ENCODE measurements at regions of chr19 and their contacts with region 1.

Region 1: DNA sequence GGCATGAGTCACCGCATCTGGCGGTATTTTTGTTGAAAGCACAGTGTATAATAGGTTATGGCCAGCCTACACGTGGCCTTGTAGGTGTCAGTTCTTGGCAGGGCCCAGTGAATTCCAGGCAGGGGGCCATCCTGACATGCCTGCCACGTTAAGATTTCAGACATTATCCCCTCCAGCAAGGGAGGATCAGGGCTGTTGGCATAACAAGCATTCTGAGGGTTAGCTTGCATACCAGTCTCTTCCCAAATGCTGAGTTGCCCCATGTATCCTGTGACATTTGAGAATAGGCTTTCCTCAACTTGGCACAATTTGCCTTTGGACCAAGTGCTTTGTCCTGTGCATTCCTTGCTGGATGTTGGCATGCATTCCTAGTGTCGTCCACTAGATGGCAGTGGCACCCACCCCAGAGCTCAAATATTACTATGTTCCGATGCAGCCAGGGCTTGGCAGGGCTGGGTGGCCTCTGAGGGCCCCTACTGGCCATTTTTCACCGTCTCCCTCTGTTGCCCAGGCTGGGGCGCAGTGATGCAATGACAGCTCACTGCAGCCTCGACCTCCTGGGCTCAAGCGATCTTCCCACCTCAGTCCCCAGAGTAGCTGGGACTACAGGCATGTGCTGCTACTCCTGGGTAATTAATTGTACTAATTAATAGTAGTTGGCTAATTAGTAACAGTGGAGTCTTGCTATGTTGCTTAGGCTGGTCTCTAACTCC is 31.2 kb downstream of the NLRP12 start:
- DNase-seq: peak; percentile 82
- ATAC-seq: peak; percentile 100
- H3K4me3 ChIP-seq: no peak overlapping the region
- H3K27ac ChIP-seq: no peak overlapping the region
- H3K4me1 ChIP-seq: no peaks in the 10 kb centered on the region
- H3K27me3 ChIP-seq: no peaks in the 10 kb centered on the region
- CTCF ChIP-seq: peak; percentile 99
- POLR2A ChIP-seq: no peak
- RAD21 ChIP-seq: peak; percentile 90

Region 2: DNA sequence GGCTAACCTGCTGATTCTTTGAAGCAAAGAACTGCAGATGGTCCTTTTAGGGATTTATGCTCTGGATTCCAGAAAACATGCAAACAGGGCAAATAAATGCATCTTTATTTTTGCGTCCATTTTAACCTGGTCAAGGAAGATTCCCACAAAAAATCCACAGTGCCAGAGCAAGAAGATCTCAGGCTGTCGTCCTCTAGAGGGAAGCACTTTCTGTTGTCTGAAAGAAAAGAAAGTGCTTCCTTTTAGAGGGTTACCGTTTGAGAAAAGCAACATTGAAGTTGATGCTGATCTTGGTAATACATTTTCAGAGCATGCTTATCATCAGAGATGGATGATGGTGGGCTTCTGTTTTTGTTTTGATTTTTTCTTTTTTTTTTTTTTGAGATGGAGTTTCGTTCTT is 85.6 kb before region 1 on chr19:
- CTCF ChIA-PET with region 1: no interaction called
- POLR2A ChIA-PET with region 1: no interaction called
- RAD21 ChIA-PET with region 1: no interaction called
- intact Hi-C with region 1: no loop called
- DNase-seq: no peak
- ATAC-seq: no peak
- H3K4me3 ChIP-seq: no peak overlapping the region
- H3K27ac ChIP-seq: no peak overlapping the region
- H3K4me1 ChIP-seq: no peaks in the 10 kb centered on the region
- H3K27me3 ChIP-seq: no peaks in the 10 kb centered on the region
- CTCF ChIP-seq: no peak
- POLR2A ChIP-seq: no peak
- RAD21 ChIP-seq: no peak

Region 3: DNA sequence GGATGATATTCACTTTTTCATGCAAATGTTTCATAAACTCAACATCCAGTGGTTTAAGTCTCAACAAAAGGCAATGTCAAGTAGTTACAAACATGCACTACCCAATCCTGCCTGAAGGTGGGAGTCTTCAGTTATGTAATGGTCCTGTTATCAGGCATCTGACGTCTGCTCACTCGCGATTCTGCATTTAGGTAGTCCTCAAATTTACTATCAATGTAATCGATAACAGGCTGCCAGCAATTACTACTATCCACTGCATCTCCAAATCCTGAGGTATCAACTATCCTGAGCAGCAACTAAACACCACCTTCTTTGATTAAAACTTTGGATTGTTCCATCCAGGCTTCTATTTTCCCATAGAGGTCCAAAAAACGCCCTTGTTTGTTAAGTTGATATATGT is 19.9 kb before region 1 on chr19:
- CTCF ChIA-PET with region 1: interaction called, 9 read pairs
- POLR2A ChIA-PET with region 1: no interaction called
- RAD21 ChIA-PET with region 1: interaction called in 1 of 2 experiments, 3 read pairs
- intact Hi-C with region 1: loop called (anchors 1 kb)
- DNase-seq: peak; percentile 61
- ATAC-seq: peak; percentile 78
- H3K4me3 ChIP-seq: no peak overlapping the region
- H3K27ac ChIP-seq: no peak overlapping the region
- H3K4me1 ChIP-seq: no peaks in the 10 kb centered on the region
- H3K27me3 ChIP-seq: no peaks in the 10 kb centered on the region
- CTCF ChIP-seq: peak; percentile 51 to 68 (median 65); a peak in 5 of 6 replicates
- POLR2A ChIP-seq: no peak
- RAD21 ChIP-seq: peak; percentile 67

Region 4: DNA sequence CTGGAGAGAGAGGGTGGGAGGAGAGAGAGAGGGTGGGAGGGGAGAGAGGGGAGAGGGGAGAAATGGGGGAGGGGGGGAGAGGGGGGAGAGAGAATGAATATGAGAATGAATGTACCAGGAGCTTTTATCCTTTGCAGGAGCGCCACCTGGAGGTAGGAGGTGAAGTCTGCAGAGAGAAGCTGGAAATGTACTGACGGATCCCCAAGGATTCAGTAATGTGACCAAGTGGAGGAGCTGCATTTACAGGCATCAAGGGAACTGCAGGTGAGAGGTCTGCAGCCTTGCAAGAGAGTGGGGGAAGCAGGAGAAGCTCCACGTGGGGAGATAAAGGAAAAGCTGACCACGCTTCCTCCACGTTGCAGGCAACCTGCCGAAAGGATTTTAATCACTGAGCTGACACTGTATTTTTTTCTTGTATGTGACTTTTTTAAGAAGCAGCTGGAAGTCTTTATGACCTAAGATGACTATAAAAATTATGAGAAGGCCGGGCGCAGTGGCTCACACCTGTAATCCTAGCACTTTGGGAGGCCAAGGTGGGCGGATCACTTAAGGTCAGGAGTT is 237.1 kb after region 1 on chr19:
- CTCF ChIA-PET with region 1: interaction called, 31 read pairs
- POLR2A ChIA-PET with region 1: no interaction called
- RAD21 ChIA-PET with region 1: interaction called in 1 of 2 experiments, 4 read pairs
- intact Hi-C with region 1: no loop called
- DNase-seq: peak; percentile 69
- ATAC-seq: peak; percentile 88
- H3K4me3 ChIP-seq: no peak overlapping the region
- H3K27ac ChIP-seq: no peak overlapping the region
- H3K4me1 ChIP-seq: peaks cover 0 to 3% of the 10 kb centered on the region in 2 experiments; a peak in 1 of 4 replicates
- H3K27me3 ChIP-seq: no peaks in the 10 kb centered on the region
- CTCF ChIP-seq: peak; percentile 66 to 73 (median 69); a peak in 5 of 6 replicates
- POLR2A ChIP-seq: no peak
- RAD21 ChIP-seq: peak; percentile 73

Region 5: DNA sequence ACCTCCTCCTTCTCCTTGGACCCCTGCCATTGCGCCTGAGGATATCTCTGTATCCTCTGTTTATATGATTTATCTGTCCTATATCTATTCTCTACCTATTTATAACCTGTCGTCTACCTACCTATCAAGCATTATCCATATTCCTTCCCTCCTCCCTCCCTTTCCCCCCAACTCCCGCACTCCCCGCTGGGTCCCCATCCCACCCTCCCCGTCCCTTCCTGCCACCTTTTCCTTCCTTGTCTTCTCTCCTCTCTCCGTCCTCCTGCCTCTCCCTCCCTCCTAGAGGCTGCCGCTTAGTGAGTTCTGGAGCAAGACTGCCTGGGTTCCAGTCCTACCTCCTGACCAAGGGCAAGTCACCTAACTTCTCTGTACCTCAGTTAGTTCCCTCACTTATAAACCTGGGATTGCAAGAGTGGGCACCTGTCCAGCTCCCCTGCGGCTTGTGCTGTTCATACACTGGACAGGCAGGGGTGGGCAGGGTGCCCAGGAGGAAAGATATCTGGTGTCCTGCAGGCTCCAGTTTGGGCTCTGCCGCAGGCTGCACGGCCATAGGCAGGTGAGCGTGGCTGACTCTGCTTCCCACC is 638.5 kb after region 1 on chr19:
- CTCF ChIA-PET with region 1: no interaction called
- POLR2A ChIA-PET with region 1: no interaction called
- RAD21 ChIA-PET with region 1: interaction called in 1 of 2 experiments, 10 read pairs
- intact Hi-C with region 1: no loop called
- DNase-seq: peak; percentile 48
- ATAC-seq: peak; percentile 51
- H3K4me3 ChIP-seq: peak overlapping the region; percentile 25 to 46
- H3K27ac ChIP-seq: peak overlapping the region; percentile 60
- H3K4me1 ChIP-seq: peaks cover 29 to 36% of the 10 kb centered on the region in 2 experiments
- H3K27me3 ChIP-seq: no peaks in the 10 kb centered on the region
- CTCF ChIP-seq: no peak
- POLR2A ChIP-seq: no peak
- RAD21 ChIP-seq: no peak

Measured in HCT116 (cell line).